Mammary epithelial cell (primary cell): ENCODE measurements at regions of chr19 and their contacts with region 1.

Region 1: GRCh38 chr19:34974646-34975045 is 10.6 kb upstream of the ZNF792 start:
- DNase-seq: no peak
- H3K4me3 ChIP-seq: no peak overlapping the region
- H3K27ac ChIP-seq: no peak overlapping the region
- H3K4me1 ChIP-seq: no peaks in the 10 kb centered on the region
- H3K27me3 ChIP-seq: no peaks in the 10 kb centered on the region
- CTCF ChIP-seq: no peak

Region 2: GRCh38 chr19:34894780-34895179 is 79.9 kb before region 1 on chr19:
- CTCF ChIA-PET with region 1: no interaction called
- dilution Hi-C with region 1: loop called (anchors 5 kb)
- in situ Hi-C with region 1: no loop called
- intact Hi-C with region 1: no loop called
- DNase-seq: no peak
- H3K4me3 ChIP-seq: no peak overlapping the region
- H3K27ac ChIP-seq: no peak overlapping the region
- H3K4me1 ChIP-seq: no peaks in the 10 kb centered on the region
- H3K27me3 ChIP-seq: no peaks in the 10 kb centered on the region
- CTCF ChIP-seq: no peak

Region 3: GRCh38 chr19:35013031-35013819 is 38.6 kb after region 1 on chr19:
- CTCF ChIA-PET with region 1: no interaction called
- dilution Hi-C with region 1: no loop called
- in situ Hi-C with region 1: no loop called
- intact Hi-C with region 1: loop called (anchors 1 kb)
- DNase-seq: peak; percentile 20
- H3K4me3 ChIP-seq: no peak overlapping the region
- H3K27ac ChIP-seq: no peak overlapping the region
- H3K4me1 ChIP-seq: no peaks in the 10 kb centered on the region
- H3K27me3 ChIP-seq: no peaks in the 10 kb centered on the region
- CTCF ChIP-seq: peak; percentile 80 to 92

Region 4: GRCh38 chr19:35030257-35031071 is 55.8 kb after region 1 on chr19 and contains the start of gene SCN1B:
- CTCF ChIA-PET with region 1: no interaction called
- dilution Hi-C with region 1: loop called (anchors 5 kb)
- in situ Hi-C with region 1: no loop called
- intact Hi-C with region 1: no loop called
- DNase-seq: peak; percentile 63
- H3K4me3 ChIP-seq: peak within 1 kb of the TSS; percentile 34 to 41 (median 35)
- H3K27ac ChIP-seq: no peak within 1 kb of the TSS
- H3K4me1 ChIP-seq: peaks cover 5% of the 10 kb centered on the region
- H3K27me3 ChIP-seq: peaks cover 4% of the 10 kb centered on the region
- CTCF ChIP-seq: no peak
- total RNA-seq, gene SCN1B: 0.71 to 0.83 TPM

Region 5: DNA sequence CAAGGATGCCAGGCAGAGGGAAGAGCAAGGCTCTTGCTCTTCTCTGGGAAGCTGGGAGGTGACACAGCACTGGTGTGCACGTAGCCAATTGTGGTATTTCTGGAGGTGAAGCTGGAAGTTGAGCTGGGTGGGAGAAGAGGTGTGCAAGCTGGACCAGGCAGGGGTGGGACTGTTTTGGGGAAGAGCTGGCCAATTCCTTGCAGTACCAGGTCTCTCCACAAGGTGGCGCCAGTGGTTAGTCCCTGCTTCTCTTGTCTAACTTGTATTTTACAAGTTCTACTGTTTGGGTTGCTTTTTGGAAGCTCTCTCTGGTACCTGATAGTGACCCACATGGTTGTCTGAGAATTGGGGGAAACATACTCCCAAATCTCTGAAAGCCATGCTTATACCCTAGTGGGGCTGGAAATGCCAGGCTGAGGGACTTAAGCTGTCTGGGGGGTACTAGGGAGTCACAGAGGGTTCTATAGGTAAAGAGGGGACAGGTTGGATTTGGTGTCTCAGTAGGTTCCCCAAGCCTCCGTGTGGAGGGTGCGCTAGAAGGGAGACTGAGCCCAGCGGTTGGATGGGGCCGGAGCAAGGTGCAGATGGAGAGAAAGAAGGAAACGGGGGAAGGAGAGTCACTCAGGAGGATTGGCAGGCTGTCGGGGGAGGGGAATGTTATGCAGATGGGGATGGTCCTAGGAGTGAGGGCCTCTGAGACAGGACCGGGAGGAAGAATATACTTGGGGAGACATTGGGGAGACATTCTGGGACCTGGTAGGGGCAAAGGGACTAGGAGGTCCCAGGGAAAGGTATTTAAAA is 69.9 kb after region 1 on chr19:
- CTCF ChIA-PET with region 1: no interaction called
- dilution Hi-C with region 1: no loop called
- in situ Hi-C with region 1: no loop called
- intact Hi-C with region 1: loop called (anchors 1 kb)
- DNase-seq: peak; percentile 48
- H3K4me3 ChIP-seq: no peak overlapping the region
- H3K27ac ChIP-seq: no peak overlapping the region
- H3K4me1 ChIP-seq: peaks cover 11% of the 10 kb centered on the region
- H3K27me3 ChIP-seq: no peaks in the 10 kb centered on the region
- CTCF ChIP-seq: peak; percentile 93 to 96

Region 6: DNA sequence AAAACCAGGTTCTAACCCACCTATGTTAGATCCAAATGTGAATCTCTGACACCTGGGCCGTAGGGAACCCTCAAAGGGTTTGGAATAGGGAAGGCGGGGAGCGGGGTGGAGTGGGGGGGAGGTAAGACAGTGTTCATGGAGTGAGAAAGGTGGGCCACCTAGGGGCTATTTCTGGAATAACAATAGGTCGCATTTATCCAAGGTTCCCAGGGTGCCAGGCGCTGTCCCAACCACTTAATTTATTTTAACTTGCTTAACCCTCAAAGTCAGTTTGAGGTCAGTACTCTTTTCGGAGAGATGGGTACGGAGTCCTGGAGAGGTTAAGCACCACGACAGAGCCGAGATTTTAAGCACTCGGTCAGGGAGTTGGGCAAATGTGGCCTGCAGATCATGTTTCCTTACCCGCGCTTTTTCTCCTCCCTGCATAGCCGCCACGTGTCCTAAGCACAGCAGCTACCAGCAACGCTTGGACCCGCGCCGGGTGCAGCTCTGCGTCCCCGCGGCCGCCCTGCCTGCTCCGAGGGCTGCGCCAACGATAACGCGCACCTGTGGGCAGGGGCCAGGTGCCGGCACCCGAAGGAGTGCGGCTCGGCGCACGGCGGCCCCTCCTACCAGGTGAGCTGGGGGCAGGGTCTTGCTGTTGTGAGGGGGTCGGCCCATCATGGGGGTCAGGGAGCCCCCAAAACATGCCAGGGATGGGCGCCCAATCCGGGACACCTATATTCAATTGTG is 116.0 kb after region 1 on chr19:
- CTCF ChIA-PET with region 1: no interaction called
- dilution Hi-C with region 1: no loop called
- in situ Hi-C with region 1: no loop called
- intact Hi-C with region 1: loop called (anchors 1 kb)
- DNase-seq: peak; percentile 46
- H3K4me3 ChIP-seq: no peak overlapping the region
- H3K27ac ChIP-seq: no peak overlapping the region
- H3K4me1 ChIP-seq: peaks cover 23% of the 10 kb centered on the region
- H3K27me3 ChIP-seq: no peaks in the 10 kb centered on the region
- CTCF ChIP-seq: peak; percentile 43 to 61